ENCODE measurements at regions of chr19 and their contacts with region 1.

Region 1: GRCh38 chr19:6862673-6863078 is 24.7 kb upstream of the ADGRE1 start:
- DNase-seq: peak; percentile 89 to 93 (median 90)
- H3K4me3 ChIP-seq: no peak overlapping the region
- H3K4me3 Mint-ChIP-seq: peak overlapping the region; percentile 83 to 90 (median 86)
- H3K27ac ChIP-seq: peak overlapping the region; percentile 48
- H3K27ac Mint-ChIP-seq: peak overlapping the region; percentile 71 to 97 (median 87)
- H3K4me1 ChIP-seq: peaks cover 11% of the 10 kb centered on the region
- H3K4me1 Mint-ChIP-seq: peaks cover 11 to 24% (median 16%) of the 10 kb centered on the region in 4 donors
- H3K27me3 ChIP-seq: no peaks in the 10 kb centered on the region
- H3K27me3 Mint-ChIP-seq: no peaks in the 10 kb centered on the region

Region 2: DNA sequence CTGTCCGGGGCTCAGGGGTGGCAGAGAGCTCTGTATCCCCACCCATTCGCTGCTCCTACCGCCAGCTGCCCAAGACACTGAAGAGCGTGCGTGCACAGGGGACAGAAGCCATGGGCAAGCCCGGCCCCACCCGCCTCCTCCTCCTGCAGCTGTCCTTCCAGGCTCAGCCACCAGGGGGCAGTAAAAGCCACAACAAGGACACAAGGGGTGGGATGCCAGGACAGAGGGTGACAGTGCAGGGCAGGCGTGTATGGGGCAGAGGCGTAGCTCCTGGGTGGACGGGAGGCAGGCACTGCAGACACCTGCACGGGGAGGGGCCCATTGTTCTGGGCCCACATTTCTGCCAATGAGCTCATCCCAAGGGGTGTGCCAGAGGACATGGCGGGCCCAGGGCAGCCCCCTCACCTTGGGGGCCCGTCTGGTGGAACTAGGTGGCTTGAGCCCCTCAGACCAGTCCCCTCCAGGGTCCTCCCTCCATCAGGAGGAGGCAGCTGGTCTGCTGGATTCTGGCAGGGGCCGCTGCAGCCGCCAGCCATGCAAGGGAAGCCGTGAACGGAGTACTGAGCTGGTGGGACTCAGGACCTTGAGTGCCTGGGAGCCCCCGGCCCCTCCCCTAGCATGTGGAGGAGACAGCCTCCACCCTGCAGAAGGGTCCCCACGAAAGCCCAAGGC is 644.0 kb before region 1 on chr19:
- CTCF ChIA-PET with region 1: interaction called, 5 read pairs
- POLR2A ChIA-PET with region 1: no interaction called
- intact Hi-C with region 1: loop called (anchors 1 kb)
- DNase-seq: peak; percentile 69 to 77 (median 72)
- H3K4me3 ChIP-seq: no peak overlapping the region
- H3K4me3 Mint-ChIP-seq: no peak overlapping the region
- H3K27ac ChIP-seq: no peak overlapping the region
- H3K27ac Mint-ChIP-seq: peak overlapping the region in 1 of 7 donors; percentile 17
- H3K4me1 ChIP-seq: no peaks in the 10 kb centered on the region
- H3K4me1 Mint-ChIP-seq: peaks cover 0 to 4% (median 2%) of the 10 kb centered on the region in 4 donors
- H3K27me3 ChIP-seq: no peaks in the 10 kb centered on the region
- H3K27me3 Mint-ChIP-seq: no peaks in the 10 kb centered on the region

Region 3: DNA sequence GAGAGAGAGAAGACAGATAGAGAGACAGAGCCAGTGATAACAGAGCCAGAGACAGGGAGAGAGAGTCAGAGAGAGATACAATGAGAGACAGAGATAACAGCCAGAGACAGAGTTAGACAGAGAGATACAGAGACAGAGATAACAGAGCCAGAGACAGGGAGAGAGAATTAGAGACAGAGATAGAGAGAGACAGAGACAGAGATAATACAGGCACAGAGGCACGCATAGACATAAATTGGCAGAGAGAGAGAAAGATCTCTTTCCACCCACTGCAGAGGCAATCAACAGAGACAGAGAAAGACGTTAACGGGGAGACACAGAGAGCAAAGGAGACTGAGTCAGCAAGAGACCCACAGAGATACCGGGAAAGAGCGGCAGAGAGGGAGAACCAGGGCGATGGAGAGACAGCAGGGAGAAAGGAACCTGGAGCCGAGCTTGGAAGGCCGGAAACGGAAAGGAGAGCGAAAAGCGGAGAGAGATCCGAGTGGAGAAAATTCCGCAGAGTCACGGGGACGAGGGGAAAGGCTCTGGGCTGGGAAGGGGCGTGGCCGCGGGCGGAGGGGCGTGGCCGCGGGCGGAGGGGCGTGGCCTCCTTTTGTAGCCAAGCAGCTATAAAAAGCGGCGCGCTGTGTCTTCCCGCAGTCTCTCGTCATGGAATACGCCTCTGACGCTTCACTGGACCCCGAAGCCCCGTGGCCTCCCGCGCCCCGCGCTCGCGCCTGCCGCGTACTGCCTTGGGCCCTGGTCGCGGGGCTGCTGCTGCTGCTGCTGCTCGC is 332.1 kb before region 1 on chr19 and contains the start of gene TNFSF9:
- CTCF ChIA-PET with region 1: no interaction called
- POLR2A ChIA-PET with region 1: no interaction called
- intact Hi-C with region 1: loop called (anchors 5 kb)
- DNase-seq: peak; percentile 61 to 82 (median 71)
- H3K4me3 ChIP-seq: peak within 1 kb of the TSS; percentile 38 to 57
- H3K4me3 Mint-ChIP-seq: peak within 1 kb of the TSS; percentile 82 to 98 (median 86)
- H3K27ac ChIP-seq: peak within 1 kb of the TSS; percentile 10
- H3K27ac Mint-ChIP-seq: peak within 1 kb of the TSS; percentile 48 to 92 (median 81)
- H3K4me1 ChIP-seq: peaks cover 28% of the 10 kb centered on the region
- H3K4me1 Mint-ChIP-seq: peaks cover 21 to 46% (median 34%) of the 10 kb centered on the region in 4 donors
- H3K27me3 ChIP-seq: peaks cover 13% of the 10 kb centered on the region
- H3K27me3 Mint-ChIP-seq: peaks cover 18 to 20% of the 10 kb centered on the region in 2 donors
- total RNA-seq, gene TNFSF9: 0.64 to 0.99 TPM

Region 4: DNA sequence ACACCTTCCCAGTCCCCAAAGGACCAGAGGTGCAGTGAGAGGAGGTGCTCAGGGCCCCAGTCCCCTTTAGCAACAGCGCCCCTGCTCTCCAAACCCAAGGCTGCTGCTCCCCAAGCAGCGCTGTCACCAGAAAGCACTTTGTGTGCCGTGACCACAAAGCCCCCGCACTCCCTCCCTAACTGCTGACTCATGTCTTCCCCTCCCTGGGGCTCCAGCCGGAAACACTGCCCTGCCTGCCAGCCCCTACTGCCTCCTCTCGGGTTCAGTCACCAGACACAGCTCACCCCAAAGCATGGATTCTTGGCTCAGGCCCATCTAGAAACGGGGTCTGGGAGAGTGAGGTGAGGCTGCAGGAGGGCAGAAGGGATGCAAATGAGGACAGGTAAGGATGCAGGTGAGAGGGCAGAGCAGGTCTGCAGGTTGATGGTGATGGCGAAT is 187.8 kb before region 1 on chr19:
- CTCF ChIA-PET with region 1: interaction called, 12 read pairs
- POLR2A ChIA-PET with region 1: interaction called, 5 read pairs
- intact Hi-C with region 1: no loop called
- DNase-seq: peak; percentile 76 to 94 (median 81)
- H3K4me3 ChIP-seq: peak overlapping the region in 1 of 2 donors; percentile 44
- H3K4me3 Mint-ChIP-seq: peak overlapping the region; percentile 58 to 77 (median 72)
- H3K27ac ChIP-seq: peak overlapping the region; percentile 44
- H3K27ac Mint-ChIP-seq: peak overlapping the region; percentile 60 to 92 (median 81)
- H3K4me1 ChIP-seq: peaks cover 55% of the 10 kb centered on the region
- H3K4me1 Mint-ChIP-seq: peaks cover 39 to 82% (median 58%) of the 10 kb centered on the region in 4 donors
- H3K27me3 ChIP-seq: no peaks in the 10 kb centered on the region
- H3K27me3 Mint-ChIP-seq: no peaks in the 10 kb centered on the region

Region 5: DNA sequence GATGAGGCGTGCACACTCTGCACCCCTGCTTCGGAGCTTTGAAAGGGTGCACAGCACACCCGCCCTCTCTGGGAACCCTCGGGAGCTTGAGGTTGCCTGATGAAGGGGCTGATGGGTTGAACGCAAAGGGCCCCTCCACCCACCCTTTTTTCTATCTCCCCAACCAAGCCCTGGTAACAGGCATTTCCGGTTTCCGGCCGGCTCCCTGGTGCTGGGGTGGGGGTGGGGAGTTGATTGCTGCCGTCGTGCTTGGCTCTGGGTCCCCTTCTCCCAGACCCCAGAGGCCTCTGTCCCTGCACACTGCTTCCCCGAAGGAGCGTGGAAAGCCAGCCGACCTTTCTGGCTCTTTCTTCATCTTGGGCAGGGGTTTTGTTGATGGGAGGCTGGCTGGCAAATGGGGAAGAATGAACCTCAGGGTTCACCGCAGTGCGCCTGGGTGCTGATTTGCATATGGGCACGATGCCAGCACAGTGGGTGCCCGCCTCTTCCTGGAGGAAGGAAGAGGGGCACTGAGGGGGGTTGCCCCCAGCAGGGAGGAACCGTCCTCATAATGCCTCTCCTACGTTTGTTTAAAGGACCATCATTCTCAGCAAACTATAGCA is 61.1 kb before region 1 on chr19:
- CTCF ChIA-PET with region 1: interaction called, 7 read pairs
- POLR2A ChIA-PET with region 1: interaction called, 10 read pairs
- intact Hi-C with region 1: loop called (anchors 2 kb)
- DNase-seq: peak; percentile 82 to 86 (median 84)
- H3K4me3 ChIP-seq: peak overlapping the region; percentile 45 to 72
- H3K4me3 Mint-ChIP-seq: peak overlapping the region; percentile 83 to 96 (median 88)
- H3K27ac ChIP-seq: peak overlapping the region; percentile 78
- H3K27ac Mint-ChIP-seq: peak overlapping the region; percentile 93 to 99 (median 96)
- H3K4me1 ChIP-seq: peaks cover 54% of the 10 kb centered on the region
- H3K4me1 Mint-ChIP-seq: peaks cover 38 to 77% (median 55%) of the 10 kb centered on the region in 4 donors
- H3K27me3 ChIP-seq: no peaks in the 10 kb centered on the region
- H3K27me3 Mint-ChIP-seq: no peaks in the 10 kb centered on the region

Region 6: DNA sequence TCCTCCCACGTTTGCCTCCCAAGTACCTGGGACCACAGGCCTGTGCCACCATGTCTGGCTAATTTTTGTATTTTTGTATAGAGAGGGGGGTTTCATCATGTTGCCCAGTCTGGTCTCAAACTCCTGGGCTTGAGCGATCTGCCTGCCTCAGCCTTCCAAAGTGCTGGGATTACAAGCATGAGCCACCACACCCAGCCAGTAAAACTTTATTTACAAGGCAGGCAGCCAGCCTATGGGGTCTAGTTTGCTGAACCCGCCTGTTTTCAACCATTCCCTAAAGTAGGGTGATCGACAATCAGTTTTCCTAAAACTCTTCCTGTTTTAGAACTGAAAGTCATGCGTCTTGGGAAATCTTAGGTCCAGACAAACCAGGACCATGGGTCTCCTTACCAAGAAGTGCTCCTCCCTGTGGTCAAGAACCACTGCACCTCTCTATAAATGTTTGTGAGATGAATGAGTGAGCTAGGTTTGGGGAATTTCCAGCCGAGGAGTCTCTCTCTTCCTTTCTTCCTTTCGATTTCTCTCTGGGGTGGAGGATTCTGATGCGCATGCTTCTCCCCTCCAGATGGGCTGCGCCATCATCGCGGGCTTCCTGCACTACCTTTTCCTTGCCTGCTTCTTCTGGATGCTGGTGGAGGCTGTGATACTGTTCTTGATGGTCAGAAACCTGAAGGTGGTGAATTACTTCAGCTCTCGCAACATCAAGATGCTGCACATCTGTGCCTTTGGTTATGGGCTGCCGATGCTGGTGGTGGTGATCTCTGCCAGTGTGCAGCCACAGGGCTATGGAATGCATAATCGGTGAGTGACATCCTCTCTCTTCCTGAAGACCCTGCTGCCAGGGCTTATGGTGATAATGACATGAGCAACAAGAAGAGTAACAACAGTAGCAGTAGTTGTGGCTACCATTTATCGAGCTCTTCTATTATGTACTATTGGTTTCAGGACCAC is 63.4 kb after region 1 on chr19:
- CTCF ChIA-PET with region 1: interaction called, 24 read pairs
- POLR2A ChIA-PET with region 1: interaction called, 4 read pairs
- intact Hi-C with region 1: no loop called
- DNase-seq: peak; percentile 8 to 63 (median 22)
- H3K4me3 ChIP-seq: peak overlapping the region; percentile 24 to 60
- H3K4me3 Mint-ChIP-seq: peak overlapping the region; percentile 48 to 92 (median 80)
- H3K27ac ChIP-seq: peak overlapping the region; percentile 13
- H3K27ac Mint-ChIP-seq: peak overlapping the region; percentile 24 to 90 (median 86)
- H3K4me1 ChIP-seq: peaks cover 14% of the 10 kb centered on the region
- H3K4me1 Mint-ChIP-seq: peaks cover 7 to 16% (median 13%) of the 10 kb centered on the region in 4 donors
- H3K27me3 ChIP-seq: no peaks in the 10 kb centered on the region
- H3K27me3 Mint-ChIP-seq: no peaks in the 10 kb centered on the region